ENCODE measurements at regions of chr4 and their contacts with region 1.

Region 1: DNA sequence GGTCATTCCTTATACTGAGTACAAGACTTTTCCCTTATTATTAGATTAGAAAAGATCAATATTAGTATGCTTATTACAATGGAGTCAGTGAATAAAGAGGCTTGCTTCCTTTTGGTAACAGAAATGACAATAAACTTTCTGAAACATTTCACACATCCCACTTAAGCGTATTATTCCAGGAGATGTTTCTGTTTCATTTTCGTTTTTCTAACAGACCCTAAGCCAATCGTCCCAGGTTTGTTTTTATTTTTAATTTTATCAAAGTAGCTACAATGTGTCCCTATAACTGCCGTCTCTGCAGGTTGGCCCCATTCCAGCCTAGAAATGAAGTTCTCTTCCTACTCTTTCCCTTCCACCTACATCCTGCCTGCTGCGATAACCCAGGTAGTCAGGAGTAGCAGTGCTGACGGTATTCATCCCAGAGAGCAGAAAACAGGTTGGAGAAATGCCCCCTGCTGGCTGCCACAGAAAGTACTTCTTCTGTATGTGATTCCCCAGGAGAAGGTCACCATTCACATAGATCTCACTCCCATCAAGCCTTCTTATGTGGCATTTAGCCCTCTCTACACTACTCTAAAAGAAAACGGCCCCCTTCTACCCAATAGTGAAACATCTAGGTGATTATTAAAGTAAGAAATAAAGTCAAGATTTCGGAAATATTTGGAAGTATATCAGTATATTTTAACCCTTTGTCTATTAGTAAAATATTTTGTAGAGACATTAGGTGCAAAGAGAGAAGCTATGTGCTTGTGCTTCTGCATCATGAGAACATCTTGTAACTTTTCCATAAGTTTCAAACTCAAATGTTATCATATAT is 40.4 kb downstream of the ENPEP start:
- H3K4me3 ChIP-seq: peak overlapping the region; percentile 33
- H3K27ac ChIP-seq: no peak overlapping the region
- H3K4me1 ChIP-seq: no peaks in the 10 kb centered on the region
- CTCF ChIP-seq: peak; percentile 39; the same call in 1 of the 2 replicates

Region 2: GRCh38 chr4:109998867-109999584 is 517.3 kb before region 1 on chr4:
- CTCF ChIA-PET with region 1: interaction called, 63 read pairs
- POLR2A ChIA-PET with region 1: no interaction called
- H3K4me3 ChIP-seq: no peak overlapping the region
- H3K27ac ChIP-seq: no peak overlapping the region
- H3K4me1 ChIP-seq: no peaks in the 10 kb centered on the region
- CTCF ChIP-seq: peak; percentile 41; the same call in 1 of the 2 replicates

Region 3: DNA sequence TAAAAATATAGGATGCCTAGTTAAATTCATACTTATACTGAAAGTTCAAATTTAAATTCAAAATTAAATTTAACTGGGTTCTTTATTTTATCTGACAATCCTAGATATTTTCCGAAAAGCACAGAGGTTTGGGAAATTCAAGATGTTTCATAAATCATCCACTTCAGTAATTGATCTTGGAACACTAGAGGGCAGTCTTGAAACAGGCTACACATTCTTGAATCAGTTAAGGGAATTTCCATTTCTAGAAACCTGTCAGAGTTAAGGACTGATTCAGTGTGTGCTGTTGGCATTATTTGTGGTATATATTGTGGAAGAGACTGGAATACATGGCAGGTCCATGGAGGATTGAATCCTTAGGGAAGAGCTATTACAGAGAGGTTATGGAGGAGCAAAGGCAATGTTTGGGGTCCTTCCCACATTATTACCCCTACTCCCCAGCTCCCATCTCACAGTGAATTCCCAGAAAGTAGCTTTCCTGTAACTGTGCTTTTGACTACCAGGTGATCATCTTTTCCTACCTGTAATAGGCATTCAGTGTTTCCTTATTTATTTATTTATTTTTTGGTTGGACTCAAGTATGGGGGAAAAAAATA is 510.8 kb before region 1 on chr4:
- CTCF ChIA-PET with region 1: interaction called, 49 read pairs
- POLR2A ChIA-PET with region 1: no interaction called
- H3K4me3 ChIP-seq: no peak overlapping the region
- H3K27ac ChIP-seq: no peak overlapping the region
- H3K4me1 ChIP-seq: no peaks in the 10 kb centered on the region
- CTCF ChIP-seq: no peak; the same call in 1 of the 2 replicates

Region 4: DNA sequence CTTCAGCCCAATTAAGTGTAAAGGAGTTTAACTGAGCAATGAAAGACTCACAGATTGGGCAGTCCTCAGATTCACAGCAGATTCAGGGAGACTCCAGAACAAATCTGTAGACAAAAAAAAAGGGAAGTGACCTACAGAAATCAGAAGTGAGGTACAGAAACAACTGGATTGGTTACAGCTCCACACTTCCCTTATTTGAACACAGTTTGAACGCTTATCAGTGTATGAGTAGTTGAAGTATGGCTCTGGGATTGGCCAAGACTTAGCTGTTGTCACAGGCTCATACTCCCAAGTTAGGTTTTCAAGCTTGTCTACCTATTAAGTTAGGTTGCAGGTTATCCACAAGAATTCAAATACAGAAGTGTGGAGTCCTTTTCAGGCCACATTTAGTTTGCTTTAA is 205.5 kb before region 1 on chr4:
- CTCF ChIA-PET with region 1: interaction called, 17 read pairs
- POLR2A ChIA-PET with region 1: no interaction called
- H3K4me3 ChIP-seq: no peak overlapping the region
- H3K27ac ChIP-seq: no peak overlapping the region
- H3K4me1 ChIP-seq: no peaks in the 10 kb centered on the region
- CTCF ChIP-seq: no peak

Region 5: GRCh38 chr4:110344162-110344561 is 172.2 kb before region 1 on chr4:
- CTCF ChIA-PET with region 1: interaction called, 132 read pairs
- POLR2A ChIA-PET with region 1: no interaction called
- H3K4me3 ChIP-seq: no peak overlapping the region
- H3K27ac ChIP-seq: no peak overlapping the region
- H3K4me1 ChIP-seq: no peaks in the 10 kb centered on the region
- CTCF ChIP-seq: peak; percentile 50; the same call in 1 of the 2 replicates

Measured in HEK293 (cell line).